ENCODE measurements at regions of chr6 and their contacts with region 1.

Region 1: GRCh38 chr6:34610819-34611477 is 54.8 kb upstream of the SPDEF start:
- DNase-seq: no peak
- ATAC-seq: no peak
- H3K4me3 ChIP-seq: no peak overlapping the region
- H3K4me3 Mint-ChIP-seq: no peak overlapping the region
- H3K27ac ChIP-seq: no peak overlapping the region
- H3K27ac Mint-ChIP-seq: peak overlapping the region in 1 of 9 donors; percentile 63
- H3K4me1 ChIP-seq: no peaks in the 10 kb centered on the region
- H3K4me1 Mint-ChIP-seq: peaks cover 2 to 17% (median 13%) of the 10 kb centered on the region in 7 donors
- H3K27me3 ChIP-seq: no peaks in the 10 kb centered on the region
- H3K27me3 Mint-ChIP-seq: no peaks in the 10 kb centered on the region

Region 2: DNA sequence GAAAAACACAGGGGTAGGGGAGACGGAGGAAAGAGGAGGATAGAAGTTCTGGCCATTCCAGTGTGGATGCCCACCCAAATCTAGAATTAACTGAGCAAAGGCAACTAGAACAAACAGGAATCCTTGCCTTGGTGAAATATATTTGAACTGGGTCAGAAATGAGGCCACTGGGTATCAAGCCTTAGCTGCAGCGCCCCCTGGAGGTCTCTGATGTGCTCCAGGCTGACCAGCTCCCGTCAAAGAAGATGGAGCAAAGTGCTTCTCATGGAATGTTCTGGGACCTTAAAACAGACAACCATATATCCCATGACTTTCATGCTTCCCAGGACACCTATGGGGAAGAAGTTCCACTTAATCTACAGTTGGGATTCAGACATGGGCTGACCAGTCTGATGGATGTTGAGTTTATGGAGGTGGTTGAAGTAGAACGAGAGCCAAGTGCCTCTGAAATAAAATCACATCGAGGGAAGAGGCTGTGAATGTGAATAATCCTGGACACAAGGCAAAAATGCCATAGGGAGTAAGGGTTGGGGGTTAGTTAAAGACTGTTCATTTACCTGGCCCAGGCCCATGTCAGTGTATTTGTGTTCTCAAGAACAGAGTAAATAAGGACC is 1484.7 kb before region 1 on chr6:
- CTCF ChIA-PET with region 1: interaction called, 10 read pairs
- POLR2A ChIA-PET with region 1: no interaction called
- intact Hi-C with region 1: no loop called
- DNase-seq: peak in 7 of 9 donors; percentile 10 to 67 (median 33)
- ATAC-seq: peak; percentile 65
- H3K4me3 ChIP-seq: no peak overlapping the region
- H3K4me3 Mint-ChIP-seq: no peak overlapping the region
- H3K27ac ChIP-seq: no peak overlapping the region
- H3K27ac Mint-ChIP-seq: no peak overlapping the region
- H3K4me1 ChIP-seq: no peaks in the 10 kb centered on the region
- H3K4me1 Mint-ChIP-seq: peaks cover 0 to 25% (median 0%) of the 10 kb centered on the region in 7 donors
- H3K27me3 ChIP-seq: no peaks in the 10 kb centered on the region
- H3K27me3 Mint-ChIP-seq: peaks cover 6 to 18% (median 11%) of the 10 kb centered on the region in 5 donors

Region 3: GRCh38 chr6:34161857-34162515 is 449.0 kb before region 1 on chr6:
- CTCF ChIA-PET with region 1: interaction called, 18 read pairs
- POLR2A ChIA-PET with region 1: interaction called, 3 read pairs
- intact Hi-C with region 1: loop called (anchors 1 kb)
- DNase-seq: no peak
- ATAC-seq: no peak
- H3K4me3 ChIP-seq: no peak overlapping the region
- H3K4me3 Mint-ChIP-seq: no peak overlapping the region
- H3K27ac ChIP-seq: no peak overlapping the region
- H3K27ac Mint-ChIP-seq: peak overlapping the region in 1 of 9 donors; percentile 44
- H3K4me1 ChIP-seq: no peaks in the 10 kb centered on the region
- H3K4me1 Mint-ChIP-seq: peaks cover 0 to 8% (median 0%) of the 10 kb centered on the region in 7 donors
- H3K27me3 ChIP-seq: no peaks in the 10 kb centered on the region
- H3K27me3 Mint-ChIP-seq: peaks cover 0 to 32% (median 0%) of the 10 kb centered on the region in 5 donors

Region 4: DNA sequence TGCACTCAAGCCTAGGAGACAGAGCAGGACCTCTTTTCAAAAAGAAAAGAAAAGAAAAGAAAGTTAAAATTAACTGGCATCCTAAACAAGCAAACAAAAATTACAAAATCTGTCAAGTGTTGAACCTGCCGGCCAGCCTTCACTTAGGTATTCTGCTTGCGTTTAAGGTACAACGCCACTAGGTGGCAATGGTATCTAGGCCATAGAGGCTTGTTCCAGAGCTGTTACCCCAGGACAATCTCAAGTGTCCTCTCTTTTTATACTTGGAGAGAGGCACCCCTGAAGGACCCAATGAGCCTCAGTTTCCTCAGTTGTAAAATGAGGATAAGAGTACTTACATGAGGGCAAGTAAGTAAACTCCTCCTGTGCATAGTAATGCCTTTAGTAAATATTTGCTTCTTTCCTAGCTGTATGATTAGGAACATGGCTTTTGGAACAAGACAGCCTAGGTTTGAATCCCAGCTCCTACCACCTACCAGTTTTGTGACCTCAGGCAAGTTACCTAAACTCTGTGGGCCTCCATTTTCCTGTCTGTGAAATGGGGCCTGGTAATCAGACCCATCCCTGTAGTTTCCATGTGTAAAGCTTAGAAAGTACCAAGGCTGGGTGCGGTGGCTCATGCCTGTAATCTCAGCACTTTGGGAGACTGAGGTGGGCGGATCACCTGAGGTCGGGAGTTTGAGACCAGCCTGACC is 150.9 kb before region 1 on chr6:
- CTCF ChIA-PET with region 1: interaction called, 91 read pairs
- POLR2A ChIA-PET with region 1: interaction called, 6 read pairs
- intact Hi-C with region 1: loop called (anchors 1 kb)
- DNase-seq: peak in 8 of 9 donors; percentile 23 to 55 (median 50)
- ATAC-seq: peak; percentile 82
- H3K4me3 ChIP-seq: no peak overlapping the region
- H3K4me3 Mint-ChIP-seq: no peak overlapping the region
- H3K27ac ChIP-seq: no peak overlapping the region
- H3K27ac Mint-ChIP-seq: no peak overlapping the region
- H3K4me1 ChIP-seq: no peaks in the 10 kb centered on the region
- H3K4me1 Mint-ChIP-seq: peaks cover 0 to 2% (median under 1%) of the 10 kb centered on the region in 7 donors
- H3K27me3 ChIP-seq: no peaks in the 10 kb centered on the region
- H3K27me3 Mint-ChIP-seq: peaks cover 4 to 24% (median 17%) of the 10 kb centered on the region in 5 donors

Region 5: GRCh38 chr6:34526992-34527728 is 83.8 kb before region 1 on chr6:
- CTCF ChIA-PET with region 1: interaction called, 13 read pairs
- POLR2A ChIA-PET with region 1: no interaction called
- intact Hi-C with region 1: loop called in 1 of 2 experiments (anchors 1 kb)
- DNase-seq: peak; percentile 88 to 96 (median 94)
- ATAC-seq: peak; percentile 100
- H3K4me3 ChIP-seq: peak overlapping the region; percentile 33
- H3K4me3 Mint-ChIP-seq: peak overlapping the region; percentile 20 to 69 (median 46)
- H3K27ac ChIP-seq: peak overlapping the region; percentile 70
- H3K27ac Mint-ChIP-seq: peak overlapping the region; percentile 12 to 89 (median 72)
- H3K4me1 ChIP-seq: peaks cover 7 to 14% of the 10 kb centered on the region in 2 donors
- H3K4me1 Mint-ChIP-seq: peaks cover 4 to 12% (median 8%) of the 10 kb centered on the region in 7 donors
- H3K27me3 ChIP-seq: no peaks in the 10 kb centered on the region
- H3K27me3 Mint-ChIP-seq: peaks cover 0 to 2% (median 0%) of the 10 kb centered on the region in 5 donors